A673 (cell line): ENCODE measurements at regions of chr14 and their contacts with region 1.

Region 1: GRCh38 chr14:102264775-102265174 is 40.2 kb downstream of the MOK start:
- DNase-seq: no peak
- H3K4me3 ChIP-seq: no peak overlapping the region
- H3K27ac ChIP-seq: no peak overlapping the region
- H3K4me1 ChIP-seq: no peaks in the 10 kb centered on the region
- H3K27me3 ChIP-seq: no peaks in the 10 kb centered on the region
- CTCF ChIP-seq: no peak

Region 2: DNA sequence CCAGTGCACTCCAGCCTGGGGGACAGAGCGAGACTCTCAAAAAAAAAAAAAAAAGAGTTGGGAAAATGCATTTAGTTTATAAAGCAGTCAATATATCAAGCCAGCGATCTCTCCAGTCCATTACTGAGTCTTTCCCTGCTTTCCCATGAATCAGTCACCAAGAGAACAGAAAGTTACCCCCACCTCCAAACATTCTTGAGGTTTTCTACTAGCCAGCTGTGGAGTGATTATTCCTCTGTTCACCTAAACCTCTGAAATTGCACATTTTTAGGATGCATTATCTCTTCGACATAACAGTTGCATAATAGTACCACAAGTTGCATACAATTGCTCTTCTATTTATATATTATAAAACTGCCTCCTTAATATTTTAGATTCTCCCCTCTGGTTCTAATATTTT is 838.3 kb before region 1 on chr14:
- CTCF ChIA-PET with region 1: no interaction called
- POLR2A ChIA-PET with region 1: no interaction called
- intact Hi-C with region 1: no loop called
- DNase-seq: no peak
- H3K4me3 ChIP-seq: no peak overlapping the region
- H3K27ac ChIP-seq: no peak overlapping the region
- H3K4me1 ChIP-seq: no peaks in the 10 kb centered on the region
- H3K27me3 ChIP-seq: peaks cover 58% of the 10 kb centered on the region
- CTCF ChIP-seq: no peak

Region 3: GRCh38 chr14:102020058-102020971 is 244.5 kb before region 1 on chr14:
- CTCF ChIA-PET with region 1: no interaction called
- POLR2A ChIA-PET with region 1: interaction called, 15 read pairs
- intact Hi-C with region 1: no loop called
- DNase-seq: no peak
- H3K4me3 ChIP-seq: no peak overlapping the region
- H3K27ac ChIP-seq: no peak overlapping the region
- H3K4me1 ChIP-seq: no peaks in the 10 kb centered on the region
- H3K27me3 ChIP-seq: no peaks in the 10 kb centered on the region
- CTCF ChIP-seq: no peak

Region 4: GRCh38 chr14:102055216-102055918 is 209.4 kb before region 1 on chr14:
- CTCF ChIA-PET with region 1: no interaction called
- POLR2A ChIA-PET with region 1: no interaction called
- intact Hi-C with region 1: no loop called
- DNase-seq: no peak
- H3K4me3 ChIP-seq: no peak overlapping the region
- H3K27ac ChIP-seq: no peak overlapping the region
- H3K4me1 ChIP-seq: no peaks in the 10 kb centered on the region
- H3K27me3 ChIP-seq: no peaks in the 10 kb centered on the region
- CTCF ChIP-seq: no peak